ENCODE measurements at regions of chr6 and their contacts with region 1.

Region 1: DNA sequence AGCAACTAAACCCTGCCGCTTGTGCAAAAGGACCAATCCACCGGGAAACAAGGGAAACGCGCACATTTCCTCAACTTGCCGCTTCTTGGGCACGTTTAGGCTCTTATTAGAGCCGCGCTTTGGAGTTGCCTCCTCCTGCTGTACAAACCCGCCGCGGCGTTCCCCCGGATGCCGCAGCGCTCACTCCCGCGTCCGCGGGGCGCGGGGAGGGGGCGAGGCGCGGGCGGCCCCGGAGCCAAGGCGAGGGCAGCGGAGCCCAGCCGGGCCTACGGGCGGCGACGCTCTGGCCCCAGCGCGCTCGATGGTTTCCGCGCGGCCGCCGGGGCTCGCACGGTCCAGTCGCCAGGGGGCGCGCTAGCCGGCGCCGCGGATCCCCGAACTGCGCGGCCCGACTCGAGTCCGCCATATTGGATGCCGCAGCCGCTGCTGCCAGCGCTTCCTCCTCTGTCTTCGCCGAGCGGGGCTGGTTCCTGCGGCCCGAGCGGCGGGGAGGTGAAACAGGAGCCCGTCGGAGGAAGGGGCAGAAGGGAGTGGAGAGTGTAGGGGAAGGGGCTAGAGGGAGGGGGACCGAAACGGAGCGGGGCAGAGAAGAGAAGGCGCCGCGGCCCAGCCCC is at the start of gene SCAF8:
- DNase-seq: peak; percentile 59 to 74
- ATAC-seq: peak; percentile 75 to 78
- H3K4me3 ChIP-seq: peak within 1 kb of the TSS; percentile 86 to 100 (median 93)
- H3K27ac ChIP-seq: peak within 1 kb of the TSS; percentile 99 to 100 (median 100)
- H3K4me1 ChIP-seq: peaks cover 40 to 41% of the 10 kb centered on the region in 2 donors
- H3K27me3 ChIP-seq: no peaks in the 10 kb centered on the region
- CTCF ChIP-seq: peak; percentile 68 to 97 (median 94)
- POLR2A ChIP-seq: peak; percentile 39 to 41
- total RNA-seq, gene SCAF8: 33.8 to 49.3 (median 41.7) TPM

Region 2: DNA sequence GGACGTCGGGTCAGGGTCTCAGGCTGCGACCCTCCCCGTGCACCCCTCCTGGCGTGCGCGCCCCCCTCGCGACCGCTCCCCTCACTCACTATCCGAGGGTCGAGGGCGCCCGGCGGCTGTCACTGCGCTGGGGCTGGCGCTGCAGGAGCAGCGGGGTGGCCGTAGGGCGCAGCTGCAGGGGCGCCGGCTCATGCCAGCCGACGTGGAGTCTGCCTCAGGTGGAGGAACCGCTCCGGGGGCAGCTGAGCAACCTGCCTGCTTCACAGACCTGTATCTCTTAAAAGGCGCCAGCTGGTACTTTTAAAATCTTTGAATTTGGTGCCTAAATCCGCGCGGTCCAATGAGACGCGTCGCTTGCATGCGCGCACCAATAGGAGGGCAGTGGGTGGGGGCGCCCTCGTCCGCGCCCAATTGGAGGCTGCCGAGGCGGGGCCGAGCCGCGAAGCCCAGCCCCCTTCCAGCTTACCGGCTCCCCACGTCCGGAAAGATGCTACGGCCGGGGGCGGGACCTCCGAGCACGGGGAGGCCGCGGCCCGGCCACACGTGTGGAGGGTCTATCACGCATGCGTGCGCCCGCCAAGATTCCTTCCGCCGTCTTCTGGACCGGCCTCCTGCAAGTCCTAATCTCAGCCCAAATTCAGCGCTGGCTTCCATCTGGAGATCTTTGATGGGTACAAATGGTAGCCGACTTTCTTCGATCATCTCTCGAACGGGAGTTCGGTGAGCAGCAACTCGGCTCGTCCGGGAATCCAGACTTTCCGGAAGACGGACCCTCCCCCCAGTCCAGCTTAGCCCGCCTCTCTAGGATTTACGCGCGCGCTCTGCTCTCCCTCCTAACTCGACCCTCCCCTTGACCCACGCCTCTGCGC is 1750.1 kb before region 1 on chr6 and contains the start of gene FBXO5:
- in situ Hi-C with region 1: loop called in 1 of 4 experiments (anchors 25 kb)
- intact Hi-C with region 1: no loop called
- DNase-seq: peak; percentile 95 to 97
- ATAC-seq: peak; percentile 92 to 94
- H3K4me3 ChIP-seq: peak within 1 kb of the TSS; percentile 68 to 80 (median 76)
- H3K27ac ChIP-seq: peak within 1 kb of the TSS; percentile 87 to 97 (median 93)
- H3K4me1 ChIP-seq: peaks cover 17 to 23% of the 10 kb centered on the region in 2 donors
- H3K27me3 ChIP-seq: no peaks in the 10 kb centered on the region
- CTCF ChIP-seq: no peak
- POLR2A ChIP-seq: peak; percentile 46 to 67
- total RNA-seq, gene FBXO5: 0.78 to 1.9 (median 1.0) TPM

Region 3: GRCh38 chr6:154510143-154510905 is 222.8 kb before region 1 on chr6 and contains the start of gene CNKSR3:
- in situ Hi-C with region 1: no loop called
- intact Hi-C with region 1: loop called (anchors 10 kb)
- DNase-seq: peak; percentile 70 to 71
- ATAC-seq: peak; percentile 81
- H3K4me3 ChIP-seq: peak within 1 kb of the TSS; percentile 74 to 83 (median 78)
- H3K27ac ChIP-seq: peak within 1 kb of the TSS; percentile 79 to 90 (median 86)
- H3K4me1 ChIP-seq: peaks cover 12 to 18% of the 10 kb centered on the region in 2 donors
- H3K27me3 ChIP-seq: no peaks in the 10 kb centered on the region
- CTCF ChIP-seq: no peak
- POLR2A ChIP-seq: peak; percentile 49 to 78
- total RNA-seq, gene CNKSR3: 0.70 to 4.6 (median 2.9) TPM

Region 4: DNA sequence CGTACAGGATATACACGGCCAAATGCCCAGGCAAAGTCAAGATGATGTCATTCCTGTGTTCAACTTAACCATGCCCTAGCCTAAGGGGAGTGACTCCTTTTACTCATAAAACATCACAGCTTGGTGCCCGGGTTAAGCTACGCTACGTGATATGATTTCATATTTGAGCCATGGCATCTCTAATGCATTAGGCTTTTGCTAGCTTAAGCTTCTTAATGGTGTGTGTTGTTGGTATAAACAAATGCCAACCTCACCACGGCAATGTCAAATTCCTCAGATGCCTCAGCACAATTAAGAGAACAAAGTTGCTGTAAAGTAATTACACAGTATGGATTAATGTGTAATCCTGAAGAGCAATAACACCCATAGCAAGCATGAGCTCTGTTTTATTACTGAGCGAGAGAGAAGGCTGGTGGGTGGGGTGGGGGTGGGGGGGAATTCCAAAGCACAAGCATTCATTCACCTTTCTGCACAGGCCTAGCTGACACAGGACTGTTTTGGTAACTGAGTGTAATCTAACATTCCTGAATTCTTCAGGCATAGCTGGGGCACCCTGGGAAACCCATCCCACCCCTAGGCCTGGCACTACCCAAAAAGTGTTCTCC is 177.9 kb before region 1 on chr6:
- in situ Hi-C with region 1: no loop called
- intact Hi-C with region 1: no loop called
- DNase-seq: no peak
- ATAC-seq: no peak
- H3K4me3 ChIP-seq: no peak overlapping the region
- H3K27ac ChIP-seq: no peak overlapping the region
- H3K4me1 ChIP-seq: no peaks in the 10 kb centered on the region
- H3K27me3 ChIP-seq: no peaks in the 10 kb centered on the region
- CTCF ChIP-seq: no peak
- POLR2A ChIP-seq: no peak

Region 5: GRCh38 chr6:154675602-154676088 is 57.5 kb before region 1 on chr6:
- in situ Hi-C with region 1: no loop called
- intact Hi-C with region 1: loop called (anchors 2 kb)
- DNase-seq: peak; percentile 67 to 88
- ATAC-seq: peak; percentile 100
- H3K4me3 ChIP-seq: no peak overlapping the region
- H3K27ac ChIP-seq: no peak overlapping the region
- H3K4me1 ChIP-seq: no peaks in the 10 kb centered on the region
- H3K27me3 ChIP-seq: no peaks in the 10 kb centered on the region
- CTCF ChIP-seq: peak; percentile 91 to 99 (median 95)
- POLR2A ChIP-seq: no peak

Region 6: DNA sequence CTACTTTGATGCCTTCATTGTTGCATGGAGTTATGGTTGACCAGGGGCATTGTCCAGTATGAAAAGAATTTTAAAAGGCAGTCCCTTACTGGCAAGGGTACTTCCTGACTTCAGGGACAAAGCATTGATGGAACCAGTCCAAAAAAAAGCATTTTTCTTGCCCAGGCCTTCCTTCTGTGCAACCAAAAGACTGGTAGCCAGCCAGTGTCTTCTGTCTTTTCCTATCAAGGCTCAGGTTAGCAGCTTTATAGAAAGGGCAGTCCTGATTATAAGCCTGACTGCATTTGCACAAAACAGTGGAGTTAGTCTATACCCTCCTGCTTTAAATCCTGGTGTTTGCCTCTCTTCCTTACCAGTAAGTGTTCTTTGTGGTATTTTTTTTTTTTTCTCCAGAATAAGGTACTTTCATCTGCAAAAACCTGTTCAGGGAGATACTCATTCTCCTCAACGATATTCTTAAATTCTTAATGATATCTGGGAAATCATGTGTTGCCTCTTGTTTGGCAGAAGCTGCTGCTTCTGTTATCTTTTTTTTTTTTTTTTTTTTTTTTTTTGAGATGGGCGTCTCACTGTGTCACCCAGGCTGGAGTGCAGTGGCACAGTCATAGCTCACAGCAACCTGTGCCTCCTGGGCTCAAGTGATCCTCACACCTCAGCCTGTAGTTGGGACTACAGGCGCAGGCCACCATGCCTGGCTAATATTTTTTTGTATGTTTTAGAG is 34.0 kb after region 1 on chr6:
- in situ Hi-C with region 1: no loop called
- intact Hi-C with region 1: loop called (anchors 5 kb)
- DNase-seq: no peak
- ATAC-seq: peak in 1 of 2 donors; percentile 41
- H3K4me3 ChIP-seq: no peak overlapping the region
- H3K27ac ChIP-seq: peak overlapping the region in 3 of 4 donors; percentile 70 to 77 (median 77)
- H3K4me1 ChIP-seq: peaks cover 64 to 78% of the 10 kb centered on the region in 2 donors
- H3K27me3 ChIP-seq: no peaks in the 10 kb centered on the region
- CTCF ChIP-seq: no peak
- POLR2A ChIP-seq: no peak

Region 7: DNA sequence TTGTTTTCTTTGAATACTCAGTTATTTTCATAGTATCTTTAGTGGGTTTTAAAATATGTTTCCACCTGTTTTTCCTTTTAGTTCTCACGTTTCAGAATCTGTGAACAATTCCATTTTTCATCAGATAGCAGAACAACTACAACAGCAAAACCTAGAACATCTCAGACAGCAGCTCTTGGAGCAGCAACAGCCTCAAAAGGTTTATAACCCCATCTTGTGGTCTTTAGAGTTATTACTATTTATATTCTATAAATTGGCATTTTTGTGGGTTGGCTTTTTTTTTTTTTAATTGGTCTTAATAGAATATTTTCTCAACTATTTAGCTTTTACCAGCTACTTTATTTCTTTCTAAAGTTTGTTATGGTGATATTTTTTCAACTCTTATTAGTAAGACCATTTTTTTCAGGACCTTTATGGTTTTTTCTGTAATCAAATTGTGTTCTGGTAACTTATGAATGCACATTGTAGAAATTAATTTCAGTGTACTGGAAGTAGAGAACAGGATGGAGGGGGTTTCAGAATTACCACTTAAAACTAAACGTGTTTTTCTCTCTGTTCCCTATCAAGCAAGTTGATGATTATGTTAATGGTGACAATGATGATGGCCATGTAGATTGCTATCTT is 72.3 kb after region 1 on chr6:
- in situ Hi-C with region 1: loop called in 1 of 4 experiments (anchors 10 kb)
- intact Hi-C with region 1: loop called (anchors 1 kb)
- DNase-seq: no peak
- ATAC-seq: peak in 1 of 2 donors; percentile 56
- H3K4me3 ChIP-seq: no peak overlapping the region
- H3K27ac ChIP-seq: no peak overlapping the region
- H3K4me1 ChIP-seq: peaks cover 5 to 14% of the 10 kb centered on the region in 2 donors
- H3K27me3 ChIP-seq: no peaks in the 10 kb centered on the region
- CTCF ChIP-seq: peak in 4 of 5 experiments; percentile 21 to 63 (median 49)
- POLR2A ChIP-seq: no peak

Region 8: GRCh38 chr6:155314092-155314772 is 581.1 kb after region 1 on chr6 and contains the start of gene TFB1M:
- in situ Hi-C with region 1: no loop called
- intact Hi-C with region 1: loop called (anchors 5 kb)
- DNase-seq: peak; percentile 98
- ATAC-seq: peak; percentile 90 to 91
- H3K4me3 ChIP-seq: peak within 1 kb of the TSS; percentile 84 to 95 (median 88)
- H3K27ac ChIP-seq: peak within 1 kb of the TSS; percentile 87 to 93 (median 91)
- H3K4me1 ChIP-seq: peaks cover 3 to 11% of the 10 kb centered on the region in 2 donors
- H3K27me3 ChIP-seq: no peaks in the 10 kb centered on the region
- CTCF ChIP-seq: no peak
- POLR2A ChIP-seq: peak; percentile 94
- total RNA-seq, gene TFB1M: 13.4 to 34.4 (median 29.2) TPM